Psoas muscle (tissue), 8 donors: ENCODE measurements at regions of chr20 and their contacts with region 1.

Region 1: GRCh38 chr20:41249406-41250281 is 67.9 kb downstream of the ZHX3 start:
- DNase-seq: peak; percentile 76 to 88
- ATAC-seq: peak; percentile 81 to 89 (median 88)
- H3K4me3 ChIP-seq: no peak overlapping the region
- H3K27ac ChIP-seq: peak overlapping the region; percentile 72
- H3K4me1 ChIP-seq: peaks cover 52% of the 10 kb centered on the region
- H3K27me3 ChIP-seq: no peaks in the 10 kb centered on the region
- CTCF ChIP-seq: peak; percentile 24

Region 2: GRCh38 chr20:41317536-41318270 is 68.1 kb after region 1 on chr20 and contains the start of gene ZHX3:
- intact Hi-C with region 1: loop called in 1 of 2 experiments (anchors 5 kb)
- DNase-seq: peak; percentile 98 to 99
- ATAC-seq: peak; percentile 94 to 97 (median 95)
- H3K4me3 ChIP-seq: peak within 1 kb of the TSS; percentile 89
- H3K27ac ChIP-seq: peak within 1 kb of the TSS; percentile 95
- H3K4me1 ChIP-seq: peaks cover 41% of the 10 kb centered on the region
- H3K27me3 ChIP-seq: no peaks in the 10 kb centered on the region
- CTCF ChIP-seq: no peak
- total RNA-seq, gene ZHX3: 39.6 to 47.7 (median 45.2) TPM